ENCODE measurements at regions of chrX and their contacts with region 1.

Region 1: GRCh38 chrX:24479924-24480323 is 14.8 kb downstream of the PDK3 start:
- DNase-seq: no peak
- H3K4me3 ChIP-seq: no peak overlapping the region
- CTCF ChIP-seq: no peak
- POLR2A ChIP-seq: no peak

Region 2: GRCh38 chrX:24395775-24396174 is 84.1 kb before region 1 on chrX:
- intact Hi-C with region 1: loop called (anchors 10 kb)
- DNase-seq: peak in 1 of 2 donors; percentile 47
- H3K4me3 ChIP-seq: no peak overlapping the region
- CTCF ChIP-seq: peak in 1 of 3 donors; percentile 33
- POLR2A ChIP-seq: no peak

Region 3: GRCh38 chrX:24528605-24529004 is 48.7 kb after region 1 on chrX:
- intact Hi-C with region 1: no loop called
- DNase-seq: no peak
- H3K4me3 ChIP-seq: no peak overlapping the region
- CTCF ChIP-seq: no peak
- POLR2A ChIP-seq: no peak

Region 4: DNA sequence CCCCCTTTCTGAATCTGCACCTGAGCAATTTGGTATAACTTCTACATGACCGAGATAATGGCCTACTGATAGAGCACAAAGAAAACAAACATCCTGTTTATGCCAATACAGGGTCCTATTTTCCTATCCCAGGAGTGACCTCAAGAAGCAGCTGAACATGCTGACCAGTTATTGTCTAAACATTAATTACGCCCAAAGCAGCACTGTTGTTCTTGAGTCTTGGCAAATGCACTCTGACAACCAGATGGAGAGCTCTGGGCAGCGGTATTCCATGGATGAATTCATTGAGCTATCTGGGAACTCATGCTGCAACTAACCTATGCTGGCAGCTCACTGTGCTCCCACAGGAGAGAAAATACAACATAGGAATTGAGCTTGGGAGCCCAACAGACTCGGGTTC is 114.6 kb after region 1 on chrX:
- intact Hi-C with region 1: no loop called
- DNase-seq: no peak
- H3K4me3 ChIP-seq: no peak overlapping the region
- CTCF ChIP-seq: no peak
- POLR2A ChIP-seq: no peak

Measured in lower leg skin (tissue), 4 donors.